ENCODE measurements at regions of chr1 and their contacts with region 1.

Region 1: DNA sequence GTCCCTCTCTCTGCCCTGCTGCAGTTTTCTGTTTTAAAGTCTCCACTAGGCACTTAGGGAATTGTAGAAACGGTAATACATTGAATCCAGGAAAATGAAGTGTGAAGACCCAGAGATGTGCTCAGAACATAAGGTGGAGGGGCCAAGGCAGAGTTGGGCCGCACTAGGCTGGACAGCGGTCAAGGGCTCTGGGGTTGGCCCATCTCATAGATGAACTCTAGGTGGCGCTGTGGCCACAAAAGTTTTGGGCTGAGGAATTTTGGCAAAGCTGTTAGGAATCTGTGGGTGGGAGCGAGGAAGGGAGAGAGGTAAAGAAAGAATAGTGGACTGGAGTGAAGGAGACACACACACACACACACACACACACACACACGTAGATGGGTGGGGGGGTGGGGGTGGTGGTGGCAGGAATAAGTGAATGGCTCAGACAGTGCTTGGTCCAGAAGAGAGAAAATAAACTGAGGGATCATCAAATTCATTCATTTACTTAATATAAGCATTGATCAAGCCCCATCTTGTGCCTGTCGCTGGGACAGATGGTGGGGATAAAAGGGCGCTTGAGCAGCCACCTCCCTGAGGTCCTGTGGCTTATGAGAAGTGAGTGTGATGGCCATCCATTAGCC is 258.5 kb downstream of the TRABD2B start:
- DNase-seq: peak in 2 of 5 donors; percentile 34 to 50
- H3K4me3 ChIP-seq: no peak overlapping the region
- H3K27ac ChIP-seq: no peak overlapping the region
- H3K4me1 ChIP-seq: no peaks in the 10 kb centered on the region
- H3K27me3 ChIP-seq: no peaks in the 10 kb centered on the region
- CTCF ChIP-seq: peak in 1 of 3 donors; percentile 6
- EP300 ChIP-seq: no peak
- POLR2A ChIP-seq: no peak

Region 2: GRCh38 chr1:47687631-47688460 is 50.8 kb before region 1 on chr1:
- intact Hi-C with region 1: no loop called
- DNase-seq: no peak
- H3K4me3 ChIP-seq: no peak overlapping the region
- H3K27ac ChIP-seq: no peak overlapping the region
- H3K4me1 ChIP-seq: no peaks in the 10 kb centered on the region
- H3K27me3 ChIP-seq: no peaks in the 10 kb centered on the region
- CTCF ChIP-seq: no peak
- EP300 ChIP-seq: no peak
- POLR2A ChIP-seq: no peak

Region 3: DNA sequence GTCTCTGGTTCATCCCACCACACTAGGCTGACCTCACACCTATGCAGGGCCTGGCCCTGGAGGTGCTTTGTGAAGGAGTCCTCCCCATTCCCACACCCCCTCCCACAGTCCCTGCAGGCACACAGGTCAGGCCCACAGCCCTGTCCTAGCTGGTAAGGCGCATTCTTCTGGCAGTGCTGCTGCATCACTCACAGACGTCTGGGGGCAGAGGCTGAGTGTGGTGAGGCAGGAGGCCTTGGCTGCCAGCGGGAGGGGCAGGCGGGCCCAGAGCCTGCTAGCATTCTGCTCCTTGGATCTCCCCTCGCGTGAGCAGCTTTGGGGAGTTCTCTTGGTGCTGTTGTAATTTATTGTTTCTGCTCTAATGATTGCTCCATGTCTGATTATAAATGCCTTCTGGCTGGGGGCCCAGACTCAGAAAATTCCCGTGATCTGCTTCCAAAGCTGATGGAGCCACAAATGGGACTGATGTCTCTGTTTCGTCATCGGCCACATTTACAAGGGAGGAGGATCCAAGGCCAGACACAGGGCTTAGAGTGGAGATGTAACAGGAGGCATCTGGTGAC is 195.7 kb after region 1 on chr1:
- intact Hi-C with region 1: loop called in 1 of 4 experiments (anchors 10 kb)
- DNase-seq: peak in 3 of 5 donors; percentile 11 to 71 (median 54)
- H3K4me3 ChIP-seq: no peak overlapping the region
- H3K27ac ChIP-seq: no peak overlapping the region
- H3K4me1 ChIP-seq: no peaks in the 10 kb centered on the region
- H3K27me3 ChIP-seq: no peaks in the 10 kb centered on the region
- CTCF ChIP-seq: no peak
- EP300 ChIP-seq: no peak
- POLR2A ChIP-seq: no peak

Region 4: DNA sequence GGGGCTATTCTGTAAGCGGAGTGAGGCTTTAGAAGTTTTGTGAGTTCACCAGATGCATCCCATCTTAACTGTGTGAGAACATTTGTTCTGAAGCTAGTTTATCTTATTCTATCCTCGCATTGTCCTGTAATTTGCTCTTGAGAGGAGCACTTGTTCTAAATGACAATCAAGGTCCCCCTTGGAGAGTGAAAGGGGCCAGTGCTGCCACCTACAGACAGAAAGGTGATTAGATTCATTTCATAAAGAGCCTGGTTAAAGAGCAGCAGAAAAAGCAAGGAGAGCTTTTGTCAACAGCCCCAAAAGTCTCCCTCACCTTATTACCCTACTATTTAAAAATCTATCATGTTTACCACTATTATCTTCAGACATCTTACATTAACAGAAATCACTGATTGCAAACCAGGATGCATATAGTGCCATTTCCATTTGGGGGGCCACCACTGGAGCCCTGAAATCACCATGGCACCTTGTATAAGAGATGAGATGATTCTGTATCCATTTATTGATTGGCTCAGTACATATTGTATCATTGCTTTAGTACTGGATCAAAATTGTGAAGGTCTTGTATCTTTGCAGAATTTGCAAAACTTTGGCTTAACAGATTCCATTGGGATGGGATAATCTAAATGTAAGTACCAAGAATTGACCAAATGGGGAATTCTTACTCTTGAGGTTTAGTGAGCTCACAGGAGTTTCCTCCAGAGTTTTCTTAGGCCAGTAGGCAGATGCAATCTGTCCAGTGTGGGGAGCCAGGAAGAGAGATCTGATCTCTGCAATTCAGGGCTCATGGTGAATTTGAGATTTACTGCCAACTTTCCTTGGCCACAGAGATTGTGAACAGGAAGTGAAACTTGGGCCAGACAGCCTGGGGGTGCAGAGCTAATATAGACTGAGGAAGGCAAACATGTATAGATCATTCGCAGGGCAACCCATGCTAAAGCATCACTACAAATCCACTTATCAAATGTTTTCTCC is 322.8 kb after region 1 on chr1:
- intact Hi-C with region 1: loop called in 1 of 4 experiments (anchors 10 kb)
- DNase-seq: peak in 1 of 5 donors; percentile 25
- H3K4me3 ChIP-seq: no peak overlapping the region
- H3K27ac ChIP-seq: no peak overlapping the region
- H3K4me1 ChIP-seq: no peaks in the 10 kb centered on the region
- H3K27me3 ChIP-seq: no peaks in the 10 kb centered on the region
- CTCF ChIP-seq: peak in 1 of 3 donors; percentile 13
- EP300 ChIP-seq: no peak
- POLR2A ChIP-seq: no peak